ENCODE measurements at regions of chr2 and their contacts with region 1.

Region 1: DNA sequence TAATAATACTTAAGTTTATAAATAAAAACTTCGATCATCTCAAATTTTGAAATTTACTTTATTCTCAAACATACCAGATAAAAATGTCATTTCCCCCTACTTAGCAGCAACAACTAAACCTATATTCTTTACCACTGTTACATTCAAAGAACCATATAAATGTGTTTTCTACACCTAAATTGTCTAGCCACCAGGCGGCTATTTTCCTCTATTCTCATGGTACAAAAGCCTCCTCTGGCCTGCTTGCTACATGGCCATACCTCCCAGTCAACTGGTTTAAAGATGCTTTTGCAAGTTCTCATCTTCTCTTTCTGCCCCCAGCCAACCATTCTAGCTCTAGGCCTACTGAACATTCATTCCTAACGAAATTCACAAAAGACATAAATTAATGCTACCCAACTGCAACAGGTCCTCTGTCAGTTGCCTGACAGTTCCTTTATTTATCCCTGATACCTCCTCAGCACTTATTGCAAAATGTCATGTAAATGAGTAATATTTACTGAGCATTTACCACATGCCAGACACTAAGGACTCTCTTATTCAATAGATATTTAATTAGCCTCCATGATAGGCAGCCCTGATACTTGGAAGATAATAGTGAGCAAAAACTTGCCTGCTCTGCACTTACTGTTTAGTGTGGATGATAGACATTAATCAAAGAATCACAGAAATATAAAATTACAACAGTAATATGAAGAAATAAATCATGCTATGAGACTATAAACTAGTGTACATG is 5.0 kb downstream of the C1D start:
- DNase-seq: no peak
- ATAC-seq: no peak
- H3K4me3 ChIP-seq: no peak overlapping the region
- H3K4me3 Mint-ChIP-seq: no peak overlapping the region
- H3K27ac ChIP-seq: no peak overlapping the region
- H3K27ac Mint-ChIP-seq: no peak overlapping the region
- H3K4me1 ChIP-seq: peaks cover 16 to 26% of the 10 kb centered on the region in 2 donors
- H3K4me1 Mint-ChIP-seq: peaks cover 68% of the 10 kb centered on the region
- H3K27me3 ChIP-seq: no peaks in the 10 kb centered on the region
- H3K27me3 Mint-ChIP-seq: no peaks in the 10 kb centered on the region
- CTCF ChIP-seq: no peak

Region 2: GRCh38 chr2:68009526-68009925 is 48.3 kb before region 1 on chr2:
- CTCF ChIA-PET with region 1: no interaction called
- POLR2A ChIA-PET with region 1: no interaction called
- intact Hi-C with region 1: no loop called
- DNase-seq: no peak
- ATAC-seq: no peak
- H3K4me3 ChIP-seq: no peak overlapping the region
- H3K4me3 Mint-ChIP-seq: no peak overlapping the region
- H3K27ac ChIP-seq: no peak overlapping the region
- H3K27ac Mint-ChIP-seq: no peak overlapping the region
- H3K4me1 ChIP-seq: no peaks in the 10 kb centered on the region
- H3K4me1 Mint-ChIP-seq: no peaks in the 10 kb centered on the region
- H3K27me3 ChIP-seq: peaks cover 0 to 3% (median 1%) of the 10 kb centered on the region in 4 experiments
- H3K27me3 Mint-ChIP-seq: peaks cover 20% of the 10 kb centered on the region
- CTCF ChIP-seq: no peak

Region 3: GRCh38 chr2:68103030-68103708 is 45.3 kb after region 1 on chr2:
- CTCF ChIA-PET with region 1: no interaction called
- POLR2A ChIA-PET with region 1: no interaction called
- intact Hi-C with region 1: loop called (anchors 1 kb)
- DNase-seq: no peak
- ATAC-seq: no peak
- H3K4me3 ChIP-seq: no peak overlapping the region
- H3K4me3 Mint-ChIP-seq: no peak overlapping the region
- H3K27ac ChIP-seq: no peak overlapping the region
- H3K27ac Mint-ChIP-seq: no peak overlapping the region
- H3K4me1 ChIP-seq: peaks cover 0 to 2% of the 10 kb centered on the region in 2 donors
- H3K4me1 Mint-ChIP-seq: peaks cover 7% of the 10 kb centered on the region
- H3K27me3 ChIP-seq: no peaks in the 10 kb centered on the region
- H3K27me3 Mint-ChIP-seq: no peaks in the 10 kb centered on the region
- CTCF ChIP-seq: no peak

Measured in B cell (primary cell).